CD4-positive, alpha-beta memory T cell (primary cell): ENCODE measurements at regions of chr7 and their contacts with region 1.

Region 1: GRCh38 chr7:67006971-67007370 is 10.3 kb downstream of the TYW1 start:
- DNase-seq: no peak
- H3K4me3 ChIP-seq: no peak overlapping the region
- H3K4me3 Mint-ChIP-seq: no peak overlapping the region
- H3K27ac ChIP-seq: no peak overlapping the region
- H3K27ac Mint-ChIP-seq: no peak overlapping the region
- H3K4me1 ChIP-seq: no peaks in the 10 kb centered on the region
- H3K4me1 Mint-ChIP-seq: peaks cover 0 to 7% (median 4%) of the 10 kb centered on the region in 4 donors
- H3K27me3 ChIP-seq: no peaks in the 10 kb centered on the region
- H3K27me3 Mint-ChIP-seq: no peaks in the 10 kb centered on the region

Region 2: DNA sequence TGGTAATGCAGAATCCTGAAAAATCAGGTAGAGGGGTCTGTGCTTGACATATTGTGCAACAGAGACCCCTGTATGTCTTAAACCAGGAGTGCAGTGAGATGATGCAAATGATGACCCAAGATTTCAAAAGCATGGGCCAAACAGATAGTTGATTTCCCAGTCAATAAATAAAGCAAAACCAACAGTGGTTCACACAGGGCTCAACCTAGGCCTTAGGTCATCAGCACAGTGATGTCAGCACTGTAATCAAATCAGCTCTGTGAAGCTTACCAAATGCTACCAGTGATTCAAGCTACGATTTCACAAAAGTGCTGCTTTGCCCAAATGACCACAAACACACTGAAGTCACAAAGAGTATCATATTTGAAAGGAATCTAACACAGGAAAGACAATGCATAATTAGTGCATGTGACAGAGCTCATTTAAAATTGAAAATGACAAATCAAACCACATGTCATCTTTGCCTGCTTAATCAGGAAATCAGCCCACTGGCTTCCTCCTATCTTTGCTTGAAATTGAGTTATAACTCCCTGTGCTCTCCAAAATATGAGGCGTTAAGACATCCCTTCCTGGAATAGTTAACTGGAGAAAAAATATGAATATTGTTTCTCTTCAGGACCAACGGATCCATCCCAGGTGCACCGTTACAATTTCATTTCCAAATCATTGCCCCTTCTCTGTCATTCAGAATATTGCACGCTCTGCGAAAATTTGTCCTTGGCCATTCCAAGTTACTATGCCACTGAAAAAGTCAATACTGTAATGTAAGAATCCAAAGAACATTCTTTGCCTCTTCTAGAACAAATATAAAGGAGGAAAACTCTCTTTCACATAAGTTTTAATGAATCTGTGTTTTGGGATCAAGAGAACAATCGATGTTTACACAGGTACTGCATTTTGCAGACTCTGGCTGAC is 973.2 kb before region 1 on chr7:
- CTCF ChIA-PET with region 1: no interaction called
- POLR2A ChIA-PET with region 1: no interaction called
- intact Hi-C with region 1: loop called (anchors 5 kb)
- DNase-seq: no peak
- H3K4me3 ChIP-seq: no peak overlapping the region
- H3K4me3 Mint-ChIP-seq: no peak overlapping the region
- H3K27ac ChIP-seq: no peak overlapping the region
- H3K27ac Mint-ChIP-seq: no peak overlapping the region
- H3K4me1 ChIP-seq: no peaks in the 10 kb centered on the region
- H3K4me1 Mint-ChIP-seq: no peaks in the 10 kb centered on the region
- H3K27me3 ChIP-seq: no peaks in the 10 kb centered on the region
- H3K27me3 Mint-ChIP-seq: no peaks in the 10 kb centered on the region

Region 3: DNA sequence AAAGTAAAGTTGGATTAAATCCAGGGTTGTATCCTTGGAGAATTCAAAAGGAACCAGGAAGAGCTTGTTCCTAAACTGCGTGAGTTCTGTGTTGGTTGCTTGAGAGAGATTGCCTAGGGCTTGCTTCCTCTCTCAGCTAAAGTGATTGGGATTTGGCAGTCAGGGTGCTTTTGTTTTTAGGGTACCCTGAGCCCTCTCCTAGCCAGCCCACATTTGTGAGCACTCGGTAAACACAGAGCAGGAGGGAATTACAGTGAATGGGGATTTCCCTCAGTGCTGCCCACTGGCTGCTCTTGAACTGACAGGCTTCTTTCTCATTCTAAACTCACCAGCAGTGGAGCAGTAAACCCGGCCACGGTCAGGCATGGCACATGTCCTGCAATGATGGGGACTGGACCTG is 654.9 kb before region 1 on chr7:
- CTCF ChIA-PET with region 1: no interaction called
- POLR2A ChIA-PET with region 1: no interaction called
- intact Hi-C with region 1: no loop called
- DNase-seq: no peak
- H3K4me3 ChIP-seq: no peak overlapping the region
- H3K4me3 Mint-ChIP-seq: no peak overlapping the region
- H3K27ac ChIP-seq: no peak overlapping the region
- H3K27ac Mint-ChIP-seq: no peak overlapping the region
- H3K4me1 ChIP-seq: no peaks in the 10 kb centered on the region
- H3K4me1 Mint-ChIP-seq: no peaks in the 10 kb centered on the region
- H3K27me3 ChIP-seq: peaks cover 5% of the 10 kb centered on the region
- H3K27me3 Mint-ChIP-seq: peaks cover 6 to 12% of the 10 kb centered on the region in 2 donors

Region 4: DNA sequence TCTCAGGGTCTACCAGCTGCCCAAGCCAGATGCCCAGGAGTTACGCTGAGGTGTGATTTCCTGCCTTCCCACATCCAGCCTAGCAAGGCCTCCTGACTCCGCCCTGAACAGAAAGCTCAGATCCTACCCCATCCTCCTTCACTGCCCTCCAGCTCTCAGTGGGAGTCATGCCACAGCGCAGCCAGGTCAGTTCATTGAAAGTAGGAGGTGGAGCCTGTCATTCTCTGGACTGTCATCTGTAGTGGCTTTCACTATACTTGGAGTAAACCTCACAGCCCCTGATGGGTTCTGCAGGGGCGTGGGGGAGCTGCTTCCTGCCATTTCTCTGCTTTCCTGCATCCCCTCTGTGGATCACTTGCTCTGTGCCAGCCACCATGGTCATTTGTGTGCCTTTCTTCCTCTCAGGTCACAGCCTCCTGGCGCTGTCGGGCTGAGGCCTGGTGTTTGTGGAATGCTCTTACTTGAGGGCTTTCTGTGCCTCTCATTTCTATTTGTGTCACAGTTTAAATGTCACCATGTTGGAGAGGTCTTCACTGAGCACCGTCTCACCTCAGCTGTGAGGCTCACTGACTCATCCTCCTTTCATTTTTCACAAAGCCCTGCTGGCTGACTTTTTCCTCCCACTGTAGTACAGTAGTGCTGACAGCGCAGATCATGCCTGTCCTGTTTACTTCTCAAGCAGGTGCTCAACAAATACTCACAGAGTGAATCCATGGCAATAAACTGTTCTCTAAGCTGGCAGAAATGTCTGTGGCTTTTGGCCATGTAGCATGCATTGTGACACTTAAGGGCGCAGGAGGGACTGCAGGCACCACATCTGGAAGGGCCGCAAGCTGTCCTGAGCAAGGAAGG is 147.0 kb before region 1 on chr7:
- CTCF ChIA-PET with region 1: no interaction called
- POLR2A ChIA-PET with region 1: no interaction called
- intact Hi-C with region 1: no loop called
- DNase-seq: peak in 3 of 5 donors; percentile 8 to 37 (median 33)
- H3K4me3 ChIP-seq: no peak overlapping the region
- H3K4me3 Mint-ChIP-seq: peak overlapping the region; percentile 57 to 84 (median 66)
- H3K27ac ChIP-seq: peak overlapping the region; percentile 32
- H3K27ac Mint-ChIP-seq: peak overlapping the region; percentile 44 to 97 (median 95)
- H3K4me1 ChIP-seq: no peaks in the 10 kb centered on the region
- H3K4me1 Mint-ChIP-seq: peaks cover 9 to 12% (median 11%) of the 10 kb centered on the region in 4 donors
- H3K27me3 ChIP-seq: no peaks in the 10 kb centered on the region
- H3K27me3 Mint-ChIP-seq: no peaks in the 10 kb centered on the region

Region 5: GRCh38 chr7:66950763-66951162 is 56.2 kb before region 1 on chr7:
- CTCF ChIA-PET with region 1: no interaction called
- POLR2A ChIA-PET with region 1: no interaction called
- intact Hi-C with region 1: no loop called
- DNase-seq: no peak
- H3K4me3 ChIP-seq: no peak overlapping the region
- H3K4me3 Mint-ChIP-seq: no peak overlapping the region
- H3K27ac ChIP-seq: no peak overlapping the region
- H3K27ac Mint-ChIP-seq: no peak overlapping the region
- H3K4me1 ChIP-seq: no peaks in the 10 kb centered on the region
- H3K4me1 Mint-ChIP-seq: peaks cover 0 to 1% (median 0%) of the 10 kb centered on the region in 4 donors
- H3K27me3 ChIP-seq: no peaks in the 10 kb centered on the region
- H3K27me3 Mint-ChIP-seq: no peaks in the 10 kb centered on the region

Region 6: GRCh38 chr7:66974986-66975590 is 31.9 kb before region 1 on chr7:
- CTCF ChIA-PET with region 1: no interaction called
- POLR2A ChIA-PET with region 1: no interaction called
- intact Hi-C with region 1: no loop called
- DNase-seq: no peak
- H3K4me3 ChIP-seq: no peak overlapping the region
- H3K4me3 Mint-ChIP-seq: no peak overlapping the region
- H3K27ac ChIP-seq: no peak overlapping the region
- H3K27ac Mint-ChIP-seq: no peak overlapping the region
- H3K4me1 ChIP-seq: no peaks in the 10 kb centered on the region
- H3K4me1 Mint-ChIP-seq: no peaks in the 10 kb centered on the region
- H3K27me3 ChIP-seq: no peaks in the 10 kb centered on the region
- H3K27me3 Mint-ChIP-seq: no peaks in the 10 kb centered on the region